Prostate gland (tissue), 2 donors: ENCODE measurements at regions of chr7 and their contacts with region 1.

Region 1: DNA sequence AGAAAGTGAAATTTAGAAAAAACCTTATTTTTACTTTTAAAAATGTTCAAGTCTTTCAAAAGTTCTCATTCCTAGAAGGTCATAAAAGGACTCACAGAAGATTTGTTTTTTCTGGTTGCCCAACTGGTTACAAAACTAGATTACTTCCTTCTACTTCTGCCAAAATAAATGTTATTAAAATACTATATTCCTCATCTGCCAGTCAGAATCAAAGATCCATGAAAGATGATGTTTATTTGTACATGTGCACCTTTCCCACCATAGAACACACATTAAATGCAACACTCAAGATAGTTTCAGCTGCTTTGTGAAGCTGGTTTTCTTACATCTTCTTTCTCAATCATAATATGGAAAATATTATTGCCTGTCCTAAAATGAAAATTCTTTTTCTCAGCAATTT is 465.4 kb downstream of the ETV1 start:
- DNase-seq: peak; percentile 4
- H3K4me3 ChIP-seq: no peak overlapping the region
- H3K27ac ChIP-seq: no peak overlapping the region
- H3K4me1 ChIP-seq: peaks cover 2% of the 10 kb centered on the region
- H3K27me3 ChIP-seq: no peaks in the 10 kb centered on the region
- CTCF ChIP-seq: no peak
- POLR2A ChIP-seq: no peak

Region 2: DNA sequence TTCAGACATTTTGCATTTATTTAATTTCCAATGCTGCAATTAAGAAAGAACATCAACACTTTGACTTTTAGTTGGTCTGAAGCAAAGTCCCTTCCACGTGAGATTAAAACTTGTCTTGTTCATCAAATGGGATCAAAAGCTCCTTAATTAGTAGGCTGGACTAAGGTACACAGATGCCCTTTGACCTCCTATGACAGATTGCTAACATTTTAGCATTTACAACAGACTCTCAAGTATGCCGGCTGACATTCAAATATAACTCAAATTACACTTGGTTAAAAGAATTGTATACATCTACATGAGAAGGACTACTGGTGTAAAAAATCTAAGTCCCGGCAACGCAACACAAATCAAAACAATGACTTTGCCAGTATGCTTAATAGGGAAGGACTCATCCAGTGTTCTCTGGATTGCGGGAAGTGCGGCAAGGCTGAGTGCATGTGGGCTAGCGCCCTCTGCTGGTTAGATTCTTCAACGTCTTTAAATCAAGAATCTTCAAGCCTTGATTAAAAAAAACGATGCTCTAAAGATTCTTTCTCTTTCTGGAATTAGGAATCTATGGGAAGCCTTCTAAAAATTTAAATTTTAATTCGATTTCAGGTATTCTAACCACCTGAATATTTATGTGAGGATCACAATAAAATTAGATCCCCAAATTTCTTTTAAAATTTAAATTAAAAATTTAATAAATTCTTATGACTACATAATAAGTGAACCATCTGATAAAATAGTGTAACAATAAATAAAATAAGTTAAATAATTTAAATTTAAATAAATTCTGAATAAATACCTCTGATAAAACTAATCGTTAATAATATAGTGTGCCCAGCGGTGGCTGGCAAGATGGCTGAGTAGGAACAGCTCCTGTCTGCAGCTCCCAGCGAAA is 933.7 kb after region 1 on chr7:
- intact Hi-C with region 1: loop called (anchors 10 kb)
- DNase-seq: peak; percentile 67
- H3K4me3 ChIP-seq: no peak overlapping the region
- H3K27ac ChIP-seq: no peak overlapping the region
- H3K4me1 ChIP-seq: no peaks in the 10 kb centered on the region
- H3K27me3 ChIP-seq: no peaks in the 10 kb centered on the region
- CTCF ChIP-seq: peak; percentile 76 to 88 (median 78)
- POLR2A ChIP-seq: no peak